Mucosa of descending colon (tissue), 3 donors: ENCODE measurements at regions of chr10 and their contacts with region 1.

Region 1: GRCh38 chr10:93074147-93074596 is 479 bp downstream of the CYP26A1 start:
- DNase-seq: no peak
- ATAC-seq: no peak
- H3K4me3 ChIP-seq: no peak overlapping the region
- H3K4me1 ChIP-seq: peaks cover 38% of the 10 kb centered on the region
- CTCF ChIP-seq: no peak

Region 2: DNA sequence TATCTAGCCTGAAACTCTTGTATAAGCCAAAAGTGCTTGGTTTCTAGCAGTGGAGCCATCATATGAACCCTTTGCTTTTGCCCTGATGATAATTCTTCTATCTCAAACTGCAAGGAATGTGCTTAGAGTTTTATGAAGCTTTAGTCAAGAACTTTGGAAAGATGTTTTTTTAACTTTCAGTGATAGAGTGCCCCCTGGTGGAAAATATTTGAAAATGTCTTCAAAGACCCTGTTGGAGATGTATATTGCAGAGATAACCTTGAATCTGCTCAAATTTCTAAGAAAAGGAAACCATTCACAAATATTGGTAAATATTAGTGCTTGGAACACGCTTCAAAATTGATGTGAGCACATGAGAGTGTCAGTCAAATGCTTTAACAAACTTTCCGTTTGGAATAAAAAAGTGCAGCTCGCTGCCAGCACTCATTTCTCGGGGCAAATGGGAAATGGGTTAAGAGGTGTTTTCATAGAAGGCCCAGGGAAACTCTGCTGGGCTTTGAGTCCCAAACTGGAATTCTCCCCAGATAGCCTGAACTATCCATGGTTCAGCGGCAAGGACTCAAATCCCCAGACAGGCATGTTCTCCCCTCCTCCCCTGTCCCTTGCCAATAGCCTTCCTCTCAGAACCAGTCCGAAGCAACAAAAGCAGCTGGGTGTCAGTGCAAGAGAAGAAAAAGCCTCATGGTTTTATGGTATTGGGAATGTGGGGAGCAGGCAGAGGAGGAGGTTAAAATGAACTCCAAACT is 278.6 kb after region 1 on chr10:
- intact Hi-C with region 1: loop called in 1 of 2 experiments (anchors 10 kb)
- DNase-seq: peak in 1 of 3 donors; percentile 8
- ATAC-seq: no peak
- H3K4me3 ChIP-seq: no peak overlapping the region
- H3K4me1 ChIP-seq: no peaks in the 10 kb centered on the region
- CTCF ChIP-seq: peak; percentile 14